BJ (cell line): ENCODE measurements at regions of chr7 and their contacts with region 1.

Region 1: DNA sequence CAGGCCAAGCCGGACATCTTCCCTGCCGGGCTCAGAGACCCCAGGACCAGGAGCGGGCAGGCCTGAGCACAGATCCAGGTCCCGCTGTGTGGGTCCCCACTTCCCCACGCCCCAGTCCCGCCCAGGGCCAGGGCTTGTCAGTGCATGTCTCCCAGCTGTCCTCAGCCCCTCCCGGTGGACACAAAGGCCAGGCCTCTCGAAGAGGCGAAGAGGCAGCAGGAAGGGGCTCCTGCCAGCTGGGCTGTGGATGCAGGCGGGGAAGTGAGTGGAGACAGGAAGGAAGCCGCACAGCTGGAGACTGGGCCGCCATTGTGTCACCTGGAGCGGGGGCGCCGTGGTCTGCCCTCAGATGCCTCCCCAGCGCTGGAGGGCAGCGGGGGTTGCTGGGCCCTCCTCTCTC is 4.8 kb downstream of the GRIFIN start:
- DNase-seq: no peak
- H3K4me3 ChIP-seq: no peak overlapping the region
- H3K27me3 ChIP-seq: peaks cover 2% of the 10 kb centered on the region
- CTCF ChIP-seq: no peak

Region 2: GRCh38 chr7:2437136-2437831 is 34.1 kb before region 1 on chr7:
- CTCF ChIA-PET with region 1: no interaction called
- POLR2A ChIA-PET with region 1: no interaction called
- DNase-seq: no peak
- H3K4me3 ChIP-seq: no peak overlapping the region
- H3K27me3 ChIP-seq: no peaks in the 10 kb centered on the region
- CTCF ChIP-seq: no peak

Region 3: GRCh38 chr7:2451171-2452073 is 20.0 kb before region 1 on chr7:
- CTCF ChIA-PET with region 1: interaction called, 82 read pairs
- POLR2A ChIA-PET with region 1: no interaction called
- DNase-seq: no peak
- H3K4me3 ChIP-seq: no peak overlapping the region
- H3K27me3 ChIP-seq: no peaks in the 10 kb centered on the region
- CTCF ChIP-seq: peak; percentile 96

Region 4: DNA sequence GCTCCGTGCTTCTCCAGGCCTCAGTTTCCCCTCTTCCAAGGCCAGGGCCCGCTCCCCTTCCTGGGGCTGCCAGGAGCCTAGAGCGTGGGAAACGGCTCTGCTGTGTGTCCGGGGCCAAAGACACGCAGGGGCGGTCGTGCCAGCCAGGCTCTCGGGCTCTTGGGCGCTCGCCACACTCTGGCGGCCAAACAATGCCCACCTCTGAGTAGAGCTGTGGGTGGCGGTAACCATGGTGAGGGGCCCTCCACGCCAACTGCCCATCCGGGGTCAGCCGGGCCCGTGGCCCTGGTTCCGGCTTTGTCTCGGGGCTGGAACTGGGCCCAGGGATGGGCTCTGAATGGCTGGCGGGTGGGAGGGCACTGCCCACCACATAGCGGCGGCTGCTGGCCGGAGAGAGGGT is 11.2 kb before region 1 on chr7:
- CTCF ChIA-PET with region 1: interaction called, 45 read pairs
- POLR2A ChIA-PET with region 1: no interaction called
- DNase-seq: no peak
- H3K4me3 ChIP-seq: no peak overlapping the region
- H3K27me3 ChIP-seq: no peaks in the 10 kb centered on the region
- CTCF ChIP-seq: no peak

Region 5: DNA sequence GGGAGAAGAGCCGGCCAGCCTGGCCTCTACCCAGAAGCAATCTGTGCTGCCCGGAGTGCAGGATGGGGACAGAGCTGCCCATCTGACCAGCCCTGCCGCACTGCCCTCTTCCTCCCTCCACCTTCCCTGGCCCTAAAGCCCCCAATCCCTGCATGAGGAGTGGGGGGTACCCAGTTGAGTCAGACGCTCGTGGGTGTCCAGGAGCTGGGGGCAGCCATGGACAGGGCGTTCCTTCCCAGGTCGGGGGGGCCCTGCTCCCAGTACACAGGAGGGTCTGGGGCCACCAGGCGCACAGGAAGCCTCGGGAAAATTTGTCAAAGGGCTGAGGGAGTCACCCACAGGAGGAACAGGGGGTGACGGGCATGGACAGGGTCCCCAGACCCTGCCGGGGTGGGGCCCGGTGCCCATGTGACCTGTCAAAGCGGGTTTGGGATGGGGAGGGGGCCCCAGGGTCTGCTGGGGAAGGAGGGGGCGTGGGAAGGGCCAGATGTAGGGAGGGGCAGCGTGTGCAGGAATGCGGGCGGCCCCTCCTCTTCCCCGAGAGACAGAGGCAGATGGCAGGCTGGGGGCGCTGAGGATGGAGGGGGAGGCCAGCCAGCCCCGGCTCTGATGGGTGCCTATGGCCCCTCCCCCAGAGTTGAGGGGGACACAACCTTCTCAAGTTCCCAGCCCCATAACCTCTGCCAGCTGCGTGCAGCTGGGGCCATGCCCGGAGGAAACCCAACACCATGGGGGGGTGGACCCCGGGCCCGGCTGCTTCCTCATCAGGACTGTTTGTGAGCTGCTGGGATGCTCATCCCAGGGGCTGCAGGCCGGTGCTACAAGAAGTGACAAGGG is 26.3 kb after region 1 on chr7:
- CTCF ChIA-PET with region 1: interaction called, 10 read pairs
- POLR2A ChIA-PET with region 1: no interaction called
- DNase-seq: no peak
- H3K4me3 ChIP-seq: no peak overlapping the region
- H3K27me3 ChIP-seq: peaks cover 4% of the 10 kb centered on the region
- CTCF ChIP-seq: no peak

Region 6: DNA sequence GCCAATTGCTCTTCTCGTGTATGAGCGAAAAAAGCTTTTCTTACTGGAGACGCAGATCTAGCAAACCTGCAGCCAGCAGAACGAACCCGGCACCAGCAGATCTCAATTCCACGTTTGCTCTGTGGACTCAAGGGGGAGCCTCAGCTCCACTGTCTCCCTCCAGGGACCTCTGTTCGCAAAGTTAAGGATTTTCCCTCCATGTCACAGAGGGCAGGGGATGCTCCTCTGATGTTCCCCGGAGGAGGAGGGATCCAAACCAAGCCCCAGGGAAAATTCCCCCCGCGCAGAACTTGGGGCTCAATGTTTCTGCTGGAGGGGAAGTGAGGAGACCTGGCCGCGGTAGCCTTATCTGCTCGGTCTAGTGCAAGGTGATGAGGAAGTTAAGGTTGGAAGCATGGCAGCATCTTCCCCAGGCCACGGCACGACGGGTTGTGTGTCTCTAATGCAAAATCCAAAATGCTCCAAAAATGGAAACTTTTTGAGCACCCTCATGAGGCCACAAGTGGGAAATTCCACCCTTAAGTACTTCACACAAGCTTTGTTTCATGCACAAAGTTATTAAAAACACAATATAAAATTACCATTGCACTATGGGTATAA is 96.4 kb after region 1 on chr7:
- CTCF ChIA-PET with region 1: interaction called, 16 read pairs
- POLR2A ChIA-PET with region 1: no interaction called
- DNase-seq: no peak
- H3K4me3 ChIP-seq: no peak overlapping the region
- H3K27me3 ChIP-seq: no peaks in the 10 kb centered on the region
- CTCF ChIP-seq: peak; percentile 76

Region 7: GRCh38 chr7:2670720-2671391 is 199.5 kb after region 1 on chr7:
- CTCF ChIA-PET with region 1: no interaction called
- POLR2A ChIA-PET with region 1: no interaction called
- DNase-seq: no peak
- H3K4me3 ChIP-seq: no peak overlapping the region
- H3K27me3 ChIP-seq: no peaks in the 10 kb centered on the region
- CTCF ChIP-seq: peak; percentile 93

Region 8: DNA sequence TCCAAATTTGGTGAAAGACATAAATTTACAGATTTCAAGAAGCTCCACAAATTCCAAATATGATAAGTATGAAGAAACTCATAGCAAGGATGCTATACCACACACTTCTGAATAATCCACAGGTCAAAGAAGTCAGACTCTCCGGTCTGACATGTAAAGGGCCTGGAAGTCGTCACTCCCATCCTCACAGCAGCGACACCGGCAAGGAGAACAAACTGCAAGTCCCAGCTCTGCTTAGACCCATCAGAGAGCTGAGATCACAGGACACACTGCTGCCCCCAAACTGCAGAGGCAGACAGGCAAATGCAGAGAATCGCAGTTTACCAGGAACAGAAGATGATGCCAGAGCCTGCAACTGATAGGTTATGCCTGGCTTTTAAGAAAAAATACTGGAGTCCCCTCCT is 278.6 kb after region 1 on chr7:
- CTCF ChIA-PET with region 1: no interaction called
- POLR2A ChIA-PET with region 1: no interaction called
- DNase-seq: no peak
- H3K4me3 ChIP-seq: no peak overlapping the region
- H3K27me3 ChIP-seq: no peaks in the 10 kb centered on the region
- CTCF ChIP-seq: no peak